ENCODE measurements at regions of chr11 and their contacts with region 1.

Region 1: GRCh38 chr11:72471005-72471898 is 36.9 kb upstream of the CLPB start:
- DNase-seq: peak; percentile 56
- H3K4me3 ChIP-seq: no peak overlapping the region
- H3K27ac ChIP-seq: no peak overlapping the region
- H3K4me1 ChIP-seq: no peaks in the 10 kb centered on the region
- H3K27me3 ChIP-seq: no peaks in the 10 kb centered on the region
- CTCF ChIP-seq: peak; percentile 40 to 69 (median 58)
- POLR2A ChIP-seq: no peak

Region 2: GRCh38 chr11:72369743-72370142 is 101.5 kb before region 1 on chr11:
- intact Hi-C with region 1: no loop called
- DNase-seq: no peak
- H3K4me3 ChIP-seq: no peak overlapping the region
- H3K27ac ChIP-seq: no peak overlapping the region
- H3K4me1 ChIP-seq: no peaks in the 10 kb centered on the region
- H3K27me3 ChIP-seq: no peaks in the 10 kb centered on the region
- CTCF ChIP-seq: no peak
- POLR2A ChIP-seq: no peak

Region 3: DNA sequence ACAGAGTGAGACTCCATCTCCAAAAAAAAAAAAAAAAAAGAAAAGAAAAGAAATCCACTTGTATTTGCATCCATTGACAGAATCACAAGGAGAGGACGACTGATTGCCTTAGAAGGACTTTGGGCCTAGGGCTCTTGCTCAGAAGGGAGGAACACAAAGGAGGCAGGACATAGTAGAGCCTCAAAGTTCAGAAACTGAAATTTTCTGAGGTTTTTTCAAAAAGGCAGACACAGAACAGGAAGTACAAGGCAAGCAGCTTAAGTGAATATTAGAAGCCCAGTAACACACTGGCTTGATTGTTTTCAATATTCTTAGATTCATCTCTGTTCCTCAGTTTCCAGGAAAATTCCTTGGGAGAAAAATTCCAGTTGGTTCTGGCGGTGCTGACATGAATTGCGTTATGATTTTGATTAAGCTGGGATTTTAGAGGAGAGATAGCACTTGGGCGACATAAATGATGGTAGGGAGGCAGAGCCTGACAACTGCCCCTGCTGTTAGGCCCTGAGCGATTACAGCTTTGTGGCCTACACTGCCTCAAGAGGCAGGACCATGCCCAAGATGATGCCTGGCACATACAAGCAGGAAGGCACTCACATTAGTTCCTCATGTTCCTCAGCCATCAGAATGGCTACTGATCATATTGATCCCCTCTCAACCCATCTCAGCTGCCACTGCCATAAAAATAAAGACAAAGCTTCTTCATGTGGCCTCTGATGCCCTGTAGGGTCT is 52.3 kb before region 1 on chr11:
- intact Hi-C with region 1: no loop called
- DNase-seq: no peak
- H3K4me3 ChIP-seq: no peak overlapping the region
- H3K27ac ChIP-seq: no peak overlapping the region
- H3K4me1 ChIP-seq: no peaks in the 10 kb centered on the region
- H3K27me3 ChIP-seq: no peaks in the 10 kb centered on the region
- CTCF ChIP-seq: no peak
- POLR2A ChIP-seq: no peak

Region 4: GRCh38 chr11:72511393-72512047 is 40.3 kb after region 1 on chr11:
- intact Hi-C with region 1: no loop called
- DNase-seq: no peak
- H3K4me3 ChIP-seq: no peak overlapping the region
- H3K27ac ChIP-seq: no peak overlapping the region
- H3K4me1 ChIP-seq: no peaks in the 10 kb centered on the region
- H3K27me3 ChIP-seq: no peaks in the 10 kb centered on the region
- CTCF ChIP-seq: no peak
- POLR2A ChIP-seq: no peak

Region 5: DNA sequence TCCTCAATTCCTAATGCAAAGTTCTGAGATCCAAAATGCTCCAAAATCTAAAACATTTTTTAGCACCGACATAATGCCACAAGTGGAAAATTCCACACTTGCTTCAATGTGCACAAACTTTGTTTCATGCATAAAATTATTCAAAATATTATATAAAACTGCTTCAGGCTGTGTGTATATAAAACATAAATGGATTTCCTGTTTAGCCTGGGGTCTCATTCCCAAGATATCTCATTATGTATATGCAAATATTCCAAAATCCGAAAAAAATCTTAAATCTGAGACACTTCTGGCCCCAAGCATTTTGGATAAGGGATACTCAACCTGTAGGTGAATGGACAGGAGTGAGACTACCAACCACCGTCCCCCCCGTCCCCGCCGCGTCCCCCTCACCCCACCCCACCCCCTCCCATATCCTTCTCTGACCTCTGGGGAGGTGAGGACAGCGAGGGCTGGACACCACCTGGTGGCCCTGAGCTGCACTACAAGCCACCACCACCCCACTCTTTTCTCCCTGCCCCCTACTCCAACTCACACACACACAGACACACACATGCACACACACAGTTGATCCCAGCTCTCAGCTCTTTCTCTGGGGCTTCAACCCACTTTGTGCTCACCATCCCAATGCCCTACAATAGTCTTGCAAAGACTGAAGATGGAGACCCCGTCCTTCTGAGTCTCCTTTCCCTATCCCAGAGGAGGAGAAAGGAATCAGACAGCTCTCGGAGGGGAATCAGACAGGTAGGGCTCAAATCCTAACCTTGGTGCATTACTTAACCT is 102.0 kb after region 1 on chr11:
- intact Hi-C with region 1: loop called (anchors 5 kb)
- DNase-seq: no peak
- H3K4me3 ChIP-seq: no peak overlapping the region
- H3K27ac ChIP-seq: no peak overlapping the region
- H3K4me1 ChIP-seq: no peaks in the 10 kb centered on the region
- H3K27me3 ChIP-seq: peaks cover 3% of the 10 kb centered on the region
- CTCF ChIP-seq: peak in 3 of 4 experiments; percentile 35 to 56 (median 53)
- POLR2A ChIP-seq: no peak

Region 6: DNA sequence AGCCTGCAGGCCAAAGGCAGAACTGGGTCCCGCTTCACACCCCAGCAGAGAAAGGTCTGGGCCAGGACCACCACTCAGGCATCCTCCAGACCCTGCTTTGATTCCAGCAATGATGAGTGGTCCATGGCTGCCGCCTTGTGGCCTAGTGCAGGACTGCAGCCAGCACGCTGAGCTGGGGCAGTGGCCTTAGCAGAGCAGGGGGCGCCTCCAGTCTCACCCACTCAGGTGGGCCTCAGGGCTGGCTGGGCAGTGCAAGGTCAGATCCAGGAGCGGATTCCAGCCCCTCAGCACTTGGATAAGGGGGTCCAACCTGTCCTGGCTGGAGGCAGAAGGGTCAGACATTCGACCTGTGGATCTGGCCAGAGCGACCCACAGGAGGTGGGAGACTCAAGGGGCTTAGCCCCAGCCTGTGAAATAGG is 212.5 kb after region 1 on chr11:
- intact Hi-C with region 1: loop called (anchors 10 kb)
- DNase-seq: peak; percentile 49
- H3K4me3 ChIP-seq: no peak overlapping the region
- H3K27ac ChIP-seq: no peak overlapping the region
- H3K4me1 ChIP-seq: no peaks in the 10 kb centered on the region
- H3K27me3 ChIP-seq: peaks cover 7% of the 10 kb centered on the region
- CTCF ChIP-seq: peak; percentile 69 to 91 (median 82)
- POLR2A ChIP-seq: no peak